Spleen (tissue), 13 donors: ENCODE measurements at regions of chr11 and their contacts with region 1.

Region 1: DNA sequence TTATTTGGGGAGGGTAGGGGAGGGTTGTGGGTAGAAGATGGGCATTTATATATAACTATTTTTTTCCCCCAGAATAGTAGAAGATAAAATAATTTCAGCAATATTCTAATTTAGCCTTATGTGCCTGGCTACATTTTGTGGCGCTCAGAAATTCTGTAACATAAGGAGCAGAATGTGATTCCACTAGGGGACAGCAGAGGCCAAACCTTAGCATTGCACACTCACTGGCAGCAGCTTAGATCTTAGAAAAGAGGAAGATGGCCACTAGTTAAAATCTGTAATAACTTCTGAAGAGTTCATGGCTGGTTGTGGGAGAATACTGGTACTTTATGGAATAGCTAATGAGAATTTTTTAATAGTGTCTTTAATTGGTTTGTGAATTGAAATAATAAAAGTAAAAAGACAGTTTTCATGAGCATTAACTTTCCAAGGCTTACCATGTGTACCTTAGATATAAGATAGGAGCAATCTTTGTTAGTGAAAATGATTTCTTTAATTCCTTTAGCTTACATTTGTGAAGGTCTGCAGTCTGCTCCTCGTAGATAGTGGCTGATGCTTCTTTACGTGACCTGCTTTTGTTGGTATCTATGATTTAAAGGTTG is 33.1 kb downstream of the DDX10 start:
- DNase-seq: no peak
- H3K4me3 ChIP-seq: no peak overlapping the region
- H3K27ac ChIP-seq: no peak overlapping the region
- H3K4me1 ChIP-seq: peaks cover 0 to 7% (median 0%) of the 10 kb centered on the region in 6 donors
- H3K27me3 ChIP-seq: no peaks in the 10 kb centered on the region
- CTCF ChIP-seq: peak; percentile 39 to 73 (median 61)
- POLR2A ChIP-seq: no peak

Region 2: DNA sequence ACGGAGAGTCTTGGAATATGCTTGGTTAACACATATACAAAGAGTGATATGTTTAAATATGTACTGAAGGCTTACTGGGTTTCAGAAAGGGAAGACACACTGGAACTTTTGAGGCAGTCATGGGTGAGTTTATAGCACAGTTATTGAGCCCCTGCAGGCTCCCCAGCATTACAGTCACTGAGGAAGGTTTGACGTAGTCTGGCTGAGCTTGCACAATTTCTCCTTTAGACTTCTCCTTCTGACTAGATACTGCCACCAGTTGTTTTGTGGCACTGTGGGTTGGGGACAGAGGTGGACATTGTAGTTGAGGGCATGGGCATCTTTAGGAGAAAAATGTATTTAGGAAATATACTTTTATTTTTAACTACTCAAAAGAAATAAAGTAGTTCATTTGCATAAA is 1009.4 kb after region 1 on chr11:
- intact Hi-C with region 1: loop called (anchors 10 kb)
- DNase-seq: no peak
- H3K4me3 ChIP-seq: no peak overlapping the region
- H3K27ac ChIP-seq: no peak overlapping the region
- H3K4me1 ChIP-seq: no peaks in the 10 kb centered on the region
- H3K27me3 ChIP-seq: no peaks in the 10 kb centered on the region
- CTCF ChIP-seq: no peak
- POLR2A ChIP-seq: no peak